Right cardiac atrium (tissue), 5 donors: ENCODE measurements at regions of chr10 and their contacts with region 1.

Region 1: DNA sequence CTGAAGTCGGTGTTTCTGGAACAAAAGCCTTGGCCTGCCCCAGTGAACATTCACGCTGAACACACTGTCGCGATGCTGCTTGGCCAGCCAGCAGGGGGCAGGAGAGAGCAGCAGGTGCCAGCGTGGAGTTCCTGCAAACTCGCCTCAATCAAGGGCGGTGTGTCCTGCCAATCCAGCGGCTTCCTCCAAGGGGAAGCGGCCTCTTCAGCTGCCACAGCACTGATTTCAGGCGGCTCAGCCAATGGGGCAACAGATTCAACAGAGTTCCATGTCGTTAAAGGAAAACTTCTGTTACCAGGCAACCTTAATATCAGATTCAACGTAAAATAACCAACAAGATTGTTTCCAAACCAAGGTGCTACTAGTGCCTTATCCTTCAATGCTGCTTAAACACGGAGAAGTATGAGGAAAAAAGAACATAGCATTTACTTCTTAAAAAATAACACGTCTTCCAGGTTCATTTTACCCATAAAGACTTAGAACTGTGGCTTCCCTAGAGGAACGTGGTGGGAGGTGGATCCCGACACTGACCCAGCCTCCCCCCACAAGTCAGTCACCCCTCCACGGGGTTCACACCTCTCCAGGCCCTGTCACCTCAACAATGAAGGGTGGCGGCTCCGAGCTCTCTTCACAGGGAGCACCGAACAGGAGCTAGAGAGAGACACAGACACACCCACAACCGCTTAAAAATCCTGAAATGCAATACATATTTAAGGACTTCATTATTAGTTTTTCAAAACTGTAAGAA is 178.2 kb downstream of the DIP2C start:
- DNase-seq: peak; percentile 94 to 97 (median 96)
- ATAC-seq: peak; percentile 93 to 95
- H3K4me3 ChIP-seq: no peak overlapping the region
- H3K27ac ChIP-seq: no peak overlapping the region
- H3K4me1 ChIP-seq: peaks cover 2% of the 10 kb centered on the region
- H3K27me3 ChIP-seq: no peaks in the 10 kb centered on the region

Region 2: GRCh38 chr10:689433-690371 is 178.4 kb after region 1 on chr10 and contains the start of gene DIP2C:
- intact Hi-C with region 1: loop called in 1 of 4 experiments (anchors 10 kb)
- DNase-seq: peak; percentile 87 to 94 (median 93)
- ATAC-seq: peak; percentile 83 to 89
- H3K4me3 ChIP-seq: peak within 1 kb of the TSS; percentile 95
- H3K27ac ChIP-seq: peak within 1 kb of the TSS; percentile 79
- H3K4me1 ChIP-seq: peaks cover 4% of the 10 kb centered on the region
- H3K27me3 ChIP-seq: no peaks in the 10 kb centered on the region
- total RNA-seq, gene DIP2C: 23.7 to 31.5 (median 26.9) TPM

Region 3: GRCh38 chr10:784403-785088 is 273.3 kb after region 1 on chr10:
- intact Hi-C with region 1: loop called in 2 of 4 experiments (anchors 5 kb)
- DNase-seq: peak; percentile 71 to 79 (median 74)
- ATAC-seq: peak; percentile 54 to 82
- H3K4me3 ChIP-seq: peak overlapping the region; percentile 32
- H3K27ac ChIP-seq: no peak overlapping the region
- H3K4me1 ChIP-seq: no peaks in the 10 kb centered on the region
- H3K27me3 ChIP-seq: no peaks in the 10 kb centered on the region